ENCODE measurements at regions of chr17 and their contacts with region 1.

Region 1: GRCh38 chr17:73156166-73156840 is 8.5 kb upstream of the SSTR2 start:
- DNase-seq: peak; percentile 47
- H3K4me3 ChIP-seq: no peak overlapping the region
- H3K27ac ChIP-seq: no peak overlapping the region
- H3K4me1 ChIP-seq: no peaks in the 10 kb centered on the region
- H3K27me3 ChIP-seq: no peaks in the 10 kb centered on the region
- CTCF ChIP-seq: peak; percentile 64 to 92

Region 2: DNA sequence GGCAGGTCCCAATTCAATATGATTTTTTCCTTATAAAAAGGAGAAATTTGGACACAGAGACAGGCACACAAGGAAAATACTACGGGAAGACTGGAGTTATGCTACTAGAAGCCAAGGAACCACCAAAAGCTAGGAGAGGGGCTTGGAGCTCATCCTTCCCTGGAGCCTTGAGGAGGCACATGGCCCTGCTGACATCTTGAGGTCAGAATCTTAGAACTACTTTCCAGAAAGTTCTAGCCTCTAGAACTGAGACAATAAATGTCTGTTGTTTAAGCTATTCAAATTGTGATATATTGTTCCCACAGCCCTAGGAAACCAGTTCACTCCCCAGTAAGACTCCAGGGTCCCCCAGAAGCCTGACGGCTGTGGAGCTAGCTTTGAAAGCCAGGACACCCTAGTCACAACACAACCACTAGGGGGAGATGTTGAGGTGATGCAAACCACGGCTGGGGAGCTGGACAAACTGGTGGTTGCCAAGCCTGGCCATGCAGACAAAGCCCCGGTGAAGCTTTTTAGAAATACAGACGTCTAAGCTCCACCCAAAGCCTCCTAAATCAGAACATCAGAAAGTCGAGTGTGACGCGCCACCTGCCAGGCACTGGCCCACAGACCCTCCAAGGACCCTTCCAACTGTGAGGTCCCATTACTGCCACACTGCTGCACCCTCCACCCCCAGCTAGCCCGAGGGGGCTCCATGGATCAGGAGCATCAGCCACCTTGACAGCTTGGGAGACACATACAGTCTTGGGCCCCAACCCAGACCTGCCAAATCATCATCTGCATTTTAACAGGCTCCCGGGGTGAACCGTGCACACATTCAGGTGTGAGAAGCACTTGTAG is 170.2 kb before region 1 on chr17:
- CTCF ChIA-PET with region 1: interaction called, 4 read pairs
- dilution Hi-C with region 1: no loop called
- in situ Hi-C with region 1: no loop called
- intact Hi-C with region 1: loop called (anchors 1 kb)
- DNase-seq: peak; percentile 58
- H3K4me3 ChIP-seq: no peak overlapping the region
- H3K27ac ChIP-seq: no peak overlapping the region
- H3K4me1 ChIP-seq: peaks cover 9% of the 10 kb centered on the region
- H3K27me3 ChIP-seq: no peaks in the 10 kb centered on the region
- CTCF ChIP-seq: peak; percentile 86 to 92

Measured in mammary epithelial cell (primary cell).